Dorsolateral prefrontal cortex (tissue), 120 donors: ENCODE measurements at regions of chr2 and their contacts with region 1.

Region 1: DNA sequence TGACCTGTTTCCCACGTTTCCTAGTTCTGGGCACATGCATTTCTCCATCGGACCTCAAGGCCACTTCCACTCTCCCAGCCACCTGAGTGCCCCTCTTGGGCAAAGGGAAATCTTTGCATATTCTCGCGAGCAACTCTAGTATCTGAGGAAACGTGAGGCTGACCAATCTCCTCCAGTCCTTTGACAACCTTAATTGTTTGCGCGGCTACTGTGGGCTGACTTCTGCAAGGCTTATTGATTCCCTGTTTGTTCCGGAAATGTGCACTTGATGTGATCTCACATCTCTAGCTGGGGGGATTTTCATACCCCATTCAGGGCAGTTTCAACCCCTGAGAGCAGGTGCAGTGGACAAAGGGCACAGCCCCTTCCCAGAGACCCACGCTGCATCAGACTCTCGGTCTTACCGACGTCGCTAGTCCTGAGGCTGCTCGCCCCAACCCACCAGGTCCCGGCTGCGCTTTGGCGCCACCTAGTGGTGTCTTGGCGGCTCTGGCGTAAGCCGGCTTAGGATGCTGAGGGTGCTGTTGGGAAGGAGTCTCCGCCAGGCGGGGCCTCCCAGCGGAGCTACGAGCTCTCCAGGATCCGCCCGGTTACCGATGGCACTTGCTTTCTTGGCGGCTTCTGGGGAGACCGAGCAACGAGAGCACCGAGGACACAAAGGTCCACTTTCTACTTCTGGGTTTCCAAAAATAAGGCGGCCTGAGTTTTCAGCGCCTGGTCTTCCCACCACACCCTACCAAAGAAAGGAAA is 24.8 kb upstream of the SPR start:
- DNase-seq: peak; percentile 80 to 94 (median 84)
- H3K4me3 ChIP-seq: peak overlapping the region; percentile 21 to 69 (median 50)
- H3K27ac ChIP-seq: peak overlapping the region in 1 of 59 donors; percentile 38
- H3K27me3 ChIP-seq: no peaks in the 10 kb centered on the region
- CTCF ChIP-seq: peak; percentile 65 to 99 (median 97)

Region 2: DNA sequence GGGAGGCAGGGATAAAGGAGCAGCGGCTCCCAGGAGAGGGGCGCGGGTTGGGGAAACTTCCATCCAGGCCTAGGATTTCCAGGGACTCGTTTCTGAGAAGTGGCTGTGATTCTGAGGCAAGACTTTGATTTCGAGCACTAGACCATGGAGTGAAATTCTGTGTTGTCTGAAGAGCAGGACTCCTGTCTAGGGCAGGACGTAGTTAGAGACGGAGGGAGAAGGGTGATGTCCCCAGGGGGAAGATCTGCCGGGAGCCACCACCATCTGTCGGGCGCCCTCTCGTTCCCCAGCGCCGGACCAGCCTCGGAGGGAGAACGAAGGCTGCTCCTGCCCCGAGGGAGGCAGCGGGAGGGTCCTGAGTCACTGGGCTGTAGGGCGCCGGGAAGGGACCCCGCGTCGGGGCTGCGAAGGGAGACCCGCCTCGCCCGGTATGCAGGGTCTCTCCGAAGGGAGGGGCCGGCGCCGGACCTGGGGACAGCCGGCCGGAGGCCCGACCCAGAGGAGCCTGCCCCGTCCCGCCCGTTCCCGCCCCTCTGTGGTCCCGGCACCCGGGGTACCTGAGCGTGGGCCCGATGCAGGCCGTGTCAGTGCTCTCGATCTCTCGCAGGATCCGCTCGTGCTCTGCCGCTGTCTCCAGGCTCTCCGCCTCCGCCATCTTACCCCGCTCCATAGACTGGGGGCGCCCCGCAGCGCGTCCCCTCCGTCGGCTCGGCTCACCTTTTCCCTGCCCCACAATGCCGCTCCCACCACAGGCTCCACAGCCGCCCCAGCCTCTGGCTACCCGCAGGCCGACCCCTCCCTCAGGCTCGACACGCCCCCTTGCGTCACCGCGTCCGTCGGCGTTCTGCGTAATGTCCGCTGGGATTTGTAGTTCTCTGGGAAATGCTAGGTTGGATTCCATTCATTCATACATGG is 36.9 kb before region 1 on chr2 and contains the start of gene EXOC6B:
- intact Hi-C with region 1: loop called in 1 of 2 experiments (anchors 5 kb)
- DNase-seq: peak; percentile 90 to 97 (median 96)
- H3K4me3 ChIP-seq: peak within 1 kb of the TSS; percentile 67 to 99 (median 93)
- H3K27ac ChIP-seq: peak within 1 kb of the TSS in 58 of 59 donors; percentile 35 to 93 (median 83)
- H3K27me3 ChIP-seq: no peaks in the 10 kb centered on the region
- CTCF ChIP-seq: peak in 51 of 56 donors; percentile 11 to 73 (median 48)
- total RNA-seq, gene EXOC6B: 102 to 181 (median 132) TPM

Region 3: GRCh38 chr2:73134471-73134870 is 272.1 kb after region 1 on chr2:
- intact Hi-C with region 1: no loop called
- DNase-seq: no peak
- H3K4me3 ChIP-seq: no peak overlapping the region
- H3K27ac ChIP-seq: no peak overlapping the region
- H3K27me3 ChIP-seq: no peaks in the 10 kb centered on the region
- CTCF ChIP-seq: no peak